ENCODE measurements at regions of chr3 and their contacts with region 1.

Region 1: DNA sequence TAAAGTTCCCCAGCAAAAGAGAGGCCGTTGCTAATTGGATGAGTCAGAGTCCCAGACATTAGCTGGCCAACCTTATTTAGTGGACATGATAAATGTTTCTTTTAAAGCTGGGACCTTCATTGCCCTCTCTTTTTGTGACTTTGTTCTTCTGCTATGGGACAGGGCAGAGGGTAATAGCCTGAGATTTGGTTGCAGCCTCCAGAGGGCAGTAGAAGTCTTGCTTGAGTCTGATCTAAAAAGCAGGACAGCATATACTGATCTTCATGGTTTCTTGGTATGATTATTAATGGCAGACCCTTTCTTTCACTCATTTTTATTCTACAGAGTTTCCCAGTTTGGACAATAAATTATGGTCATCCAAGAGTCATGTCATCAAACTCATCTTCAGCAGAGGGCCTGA is 25.1 kb upstream of the ZKSCAN7 start:
- DNase-seq: no peak
- ATAC-seq: no peak

Region 2: GRCh38 chr3:44661189-44661588 is 131.3 kb after region 1 on chr3:
- intact Hi-C with region 1: no loop called
- DNase-seq: no peak
- ATAC-seq: no peak

Region 3: DNA sequence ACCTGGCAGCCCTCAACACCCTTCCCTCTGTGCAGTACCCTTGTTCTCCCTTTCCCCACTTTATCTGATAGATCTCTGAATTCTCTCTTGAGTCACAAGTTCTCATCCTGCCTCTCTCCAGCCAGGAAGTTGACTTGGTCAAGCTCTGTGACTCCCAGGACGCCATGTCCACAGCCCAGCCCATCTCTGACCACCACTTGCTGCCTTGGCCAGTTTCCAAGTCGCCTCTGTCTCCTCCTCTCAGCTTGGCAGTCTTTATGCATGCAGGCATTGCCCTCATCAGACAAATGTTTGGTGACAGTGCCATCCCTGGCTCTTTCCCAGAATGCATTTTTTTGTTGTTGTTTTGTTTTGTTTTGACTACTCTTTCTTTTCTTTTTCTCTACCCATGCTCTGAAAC is 144.3 kb after region 1 on chr3:
- intact Hi-C with region 1: no loop called
- DNase-seq: no peak
- ATAC-seq: no peak

Region 4: GRCh38 chr3:44883999-44884431 is 354.1 kb after region 1 on chr3:
- intact Hi-C with region 1: no loop called
- DNase-seq: no peak
- ATAC-seq: peak in 1 of 2 donors; percentile 72

Region 5: DNA sequence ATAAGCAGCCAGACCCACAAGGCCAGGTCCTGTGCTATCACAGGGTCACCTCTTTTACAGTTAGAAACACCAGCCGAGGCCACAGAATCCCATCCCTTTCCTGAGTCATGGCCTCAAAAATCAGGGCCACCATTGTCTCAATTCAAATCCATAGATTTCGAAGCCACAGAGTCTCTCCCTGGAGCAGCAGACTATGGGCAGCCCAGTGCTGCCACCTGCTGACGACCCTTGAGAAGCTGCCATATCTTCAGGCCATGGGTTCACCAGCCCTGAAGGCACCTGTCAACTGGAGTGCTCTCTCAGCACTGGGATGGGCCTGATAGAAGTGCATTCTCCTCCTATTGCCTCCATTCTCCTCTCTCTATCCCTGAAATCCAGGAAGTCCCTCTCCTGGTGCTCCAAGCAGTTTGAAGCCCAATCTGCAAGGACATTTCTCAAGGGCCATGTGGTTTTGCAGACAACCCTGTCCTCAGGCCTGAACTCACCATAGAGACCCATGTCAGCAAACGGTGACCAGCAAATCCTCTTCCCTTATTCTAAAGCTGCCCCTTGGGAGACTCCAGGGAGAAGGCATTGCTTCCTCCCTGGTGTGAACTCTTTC is 384.0 kb after region 1 on chr3:
- intact Hi-C with region 1: loop called in 1 of 2 experiments (anchors 2 kb)
- DNase-seq: peak; percentile 74
- ATAC-seq: peak; percentile 66 to 80